ENCODE measurements at regions of chr17 and their contacts with region 1.

Region 1: DNA sequence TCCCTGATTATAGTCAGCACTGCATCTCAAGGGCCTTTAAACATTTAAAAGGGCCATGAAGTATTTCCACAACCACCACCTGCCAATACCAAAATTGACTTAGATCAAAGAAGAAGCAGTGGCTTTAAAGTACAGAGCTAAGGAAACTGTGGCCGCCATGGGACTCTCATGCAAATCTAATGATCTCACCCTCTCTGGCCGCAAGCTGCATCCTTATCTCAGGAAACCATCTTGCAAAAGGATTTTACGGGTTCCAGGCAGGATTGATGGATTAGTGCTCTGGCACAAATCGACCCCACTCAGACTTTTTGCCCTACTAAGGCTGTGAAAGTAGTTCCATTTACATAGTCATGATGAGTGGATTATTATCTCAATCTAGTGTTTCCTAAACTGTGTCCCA is 22.6 kb downstream of the CDRT4 start:
- DNase-seq: no peak
- ATAC-seq: no peak
- H3K4me3 ChIP-seq: no peak overlapping the region
- H3K27ac ChIP-seq: no peak overlapping the region
- H3K4me1 ChIP-seq: peaks cover 14% of the 10 kb centered on the region
- H3K27me3 ChIP-seq: no peaks in the 10 kb centered on the region

Region 2: DNA sequence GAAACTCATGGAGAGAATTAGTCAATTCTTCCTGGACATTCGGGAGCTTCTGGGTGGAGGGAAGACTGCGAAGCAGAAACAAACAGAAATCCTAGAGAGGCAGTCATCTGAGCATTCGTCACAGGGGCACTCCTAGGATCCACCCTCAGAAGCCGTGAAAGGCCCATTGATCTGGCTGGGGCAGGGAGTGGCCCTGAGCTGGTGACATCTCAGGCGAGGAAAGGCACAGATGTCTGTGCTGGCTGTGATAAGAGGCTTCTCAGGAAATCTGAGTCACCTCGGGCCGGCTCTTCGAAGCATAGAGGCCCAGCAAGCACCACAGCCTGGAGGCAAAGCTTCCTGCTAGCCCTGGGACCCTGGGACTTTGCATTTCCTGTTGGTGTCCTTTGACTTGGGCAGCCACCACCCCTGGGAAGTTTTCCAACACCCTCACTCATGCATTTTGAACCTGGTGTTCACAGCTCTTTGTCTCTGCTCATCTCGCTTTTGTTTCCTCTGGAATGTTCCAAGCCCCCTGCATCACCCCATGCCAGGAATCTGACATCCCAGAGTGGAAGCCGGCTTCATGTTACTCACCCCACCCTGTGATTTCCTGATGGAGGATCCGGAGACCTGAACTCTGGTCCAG is 45.9 kb after region 1 on chr17:
- intact Hi-C with region 1: loop called in 2 of 4 experiments (anchors 5 to 10 kb)
- DNase-seq: peak; percentile 83 to 90 (median 86)
- ATAC-seq: peak; percentile 92 to 99
- H3K4me3 ChIP-seq: no peak overlapping the region
- H3K27ac ChIP-seq: peak overlapping the region; percentile 84
- H3K4me1 ChIP-seq: no peaks in the 10 kb centered on the region
- H3K27me3 ChIP-seq: no peaks in the 10 kb centered on the region

Region 3: DNA sequence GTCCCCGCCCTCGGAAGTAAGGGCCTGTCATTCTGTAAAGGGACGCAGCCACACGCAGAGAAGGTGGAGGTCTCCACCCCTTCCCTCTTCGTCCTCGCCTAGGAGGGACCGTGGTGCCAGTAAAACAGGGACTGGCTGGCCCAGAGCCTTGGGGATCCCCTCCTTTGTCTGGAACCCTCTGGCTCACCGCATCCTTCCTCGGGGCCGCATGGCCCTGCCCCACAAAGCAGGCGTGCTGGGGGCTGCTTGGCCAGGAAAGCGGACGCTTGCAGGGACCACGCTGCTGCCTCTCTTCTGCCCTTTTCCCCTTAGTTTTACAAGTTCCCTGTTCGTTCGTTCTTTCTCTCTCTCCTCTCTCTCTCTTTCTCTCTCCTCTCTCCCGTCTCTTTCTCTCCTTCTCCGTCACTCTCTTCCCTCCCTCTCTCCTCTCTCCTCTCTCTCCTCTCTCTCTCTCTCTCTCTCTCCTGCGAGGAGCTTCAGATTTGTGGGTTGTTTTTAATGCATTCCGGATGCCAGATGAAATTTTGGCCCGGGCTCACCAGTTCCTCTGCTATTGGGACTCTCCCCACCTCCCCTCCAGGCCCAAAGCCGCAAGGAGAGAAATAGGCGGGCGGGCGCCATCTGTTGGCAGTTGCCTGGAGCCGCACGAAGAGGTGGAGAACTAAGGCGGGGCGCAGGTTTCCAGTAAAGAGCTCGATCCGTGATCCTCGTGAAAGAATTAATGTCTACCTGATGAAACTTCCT is 57.7 kb after region 1 on chr17:
- intact Hi-C with region 1: loop called in 2 of 4 experiments (anchors 5 to 10 kb)
- DNase-seq: peak; percentile 93 to 97 (median 97)
- ATAC-seq: peak; percentile 94
- H3K4me3 ChIP-seq: peak overlapping the region; percentile 30
- H3K27ac ChIP-seq: peak overlapping the region; percentile 89
- H3K4me1 ChIP-seq: peaks cover 6% of the 10 kb centered on the region
- H3K27me3 ChIP-seq: no peaks in the 10 kb centered on the region

Measured in right cardiac atrium (tissue), 5 donors.